Tibial artery (tissue), 4 donors: ENCODE measurements at regions of chr4 and their contacts with region 1.

Region 1: GRCh38 chr4:168831919-168832762 is 177.9 kb downstream of the CBR4 start:
- DNase-seq: peak; percentile 90 to 93
- H3K4me3 ChIP-seq: peak overlapping the region; percentile 80 to 96
- H3K27ac ChIP-seq: peak overlapping the region; percentile 88 to 98
- H3K4me1 ChIP-seq: peaks cover 0 to 38% (median 17%) of the 10 kb centered on the region in 4 donors
- H3K27me3 ChIP-seq: no peaks in the 10 kb centered on the region
- CTCF ChIP-seq: peak in 1 of 2 experiments; percentile 8

Region 2: GRCh38 chr4:168717847-168718246 is 114.3 kb before region 1 on chr4:
- intact Hi-C with region 1: loop called (anchors 5 kb)
- DNase-seq: no peak
- H3K4me3 ChIP-seq: no peak overlapping the region
- H3K27ac ChIP-seq: peak overlapping the region; percentile 78 to 81
- H3K4me1 ChIP-seq: peaks cover 0 to 45% (median 19%) of the 10 kb centered on the region in 4 donors
- H3K27me3 ChIP-seq: no peaks in the 10 kb centered on the region
- CTCF ChIP-seq: no peak

Region 3: DNA sequence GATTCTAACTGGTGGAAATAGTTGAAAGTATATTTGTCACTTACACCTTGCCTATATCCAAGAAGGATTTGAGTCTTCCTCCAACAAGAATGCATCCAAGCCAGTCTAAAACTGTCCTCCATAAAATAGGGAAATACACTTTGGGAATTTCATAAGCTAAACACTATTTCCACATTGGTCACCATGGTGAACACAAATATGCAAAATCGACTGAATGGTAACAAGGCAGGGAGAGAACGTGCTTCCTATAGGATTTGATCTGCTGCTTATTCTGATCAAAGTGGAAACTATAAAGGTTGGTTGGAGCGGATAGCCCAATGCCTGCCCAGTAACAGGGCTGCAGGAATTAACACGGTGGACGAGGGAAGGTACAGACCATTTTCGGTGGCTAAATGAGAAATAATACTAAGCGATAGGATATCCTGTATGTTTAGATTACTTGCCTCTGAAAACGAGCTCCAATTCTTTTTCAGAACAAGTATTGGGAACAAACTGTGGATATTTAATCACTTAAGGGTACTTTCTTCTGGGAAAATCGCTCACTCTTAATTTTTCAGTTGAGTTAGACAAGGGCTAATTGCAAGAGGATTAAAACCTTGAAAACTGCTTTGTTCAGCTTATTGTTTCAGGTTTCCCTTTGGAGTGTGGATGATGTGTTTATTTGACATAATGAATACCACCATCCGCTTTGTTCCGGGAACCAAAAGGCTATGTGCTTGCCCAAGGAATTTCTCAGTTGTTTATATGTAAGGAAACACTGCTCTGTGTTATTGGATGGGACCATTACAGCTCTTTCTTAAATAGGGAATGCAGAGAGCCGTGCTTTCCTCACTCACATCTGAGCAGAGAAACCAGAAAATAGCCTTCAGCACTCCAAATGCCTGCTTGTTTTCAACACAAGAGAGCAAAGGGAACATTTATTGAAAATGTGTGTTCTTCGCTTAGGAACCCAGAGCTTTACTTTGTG is 16.5 kb before region 1 on chr4:
- intact Hi-C with region 1: loop called (anchors 2 kb)
- DNase-seq: no peak
- H3K4me3 ChIP-seq: peak overlapping the region; percentile 22 to 35
- H3K27ac ChIP-seq: peak overlapping the region; percentile 76 to 88
- H3K4me1 ChIP-seq: peaks cover 0 to 80% (median 52%) of the 10 kb centered on the region in 4 donors
- H3K27me3 ChIP-seq: no peaks in the 10 kb centered on the region
- CTCF ChIP-seq: no peak